ENCODE measurements at regions of chr11 and their contacts with region 1.

Region 1: GRCh38 chr11:8126649-8127289 is 42.1 kb downstream of the RIC3 start:
- DNase-seq: no peak
- ATAC-seq: no peak
- H3K4me3 ChIP-seq: no peak overlapping the region
- H3K27ac ChIP-seq: no peak overlapping the region
- H3K4me1 ChIP-seq: no peaks in the 10 kb centered on the region
- H3K27me3 ChIP-seq: no peaks in the 10 kb centered on the region; the same call in 1 of the 2 replicates
- CTCF ChIP-seq: no peak

Region 2: GRCh38 chr11:8178297-8178696 is 51.5 kb after region 1 on chr11:
- CTCF ChIA-PET with region 1: interaction called, 4 read pairs
- POLR2A ChIA-PET with region 1: interaction called, 11 read pairs
- in situ Hi-C with region 1: no loop called
- intact Hi-C with region 1: no loop called
- DNase-seq: no peak
- ATAC-seq: no peak
- H3K4me3 ChIP-seq: no peak overlapping the region
- H3K27ac ChIP-seq: no peak overlapping the region
- H3K4me1 ChIP-seq: no peaks in the 10 kb centered on the region
- H3K27me3 ChIP-seq: peaks cover 20% of the 10 kb centered on the region
- CTCF ChIP-seq: no peak

Measured in Panc1 (cell line).